ENCODE measurements at regions of chr3 and their contacts with region 1.

Region 1: DNA sequence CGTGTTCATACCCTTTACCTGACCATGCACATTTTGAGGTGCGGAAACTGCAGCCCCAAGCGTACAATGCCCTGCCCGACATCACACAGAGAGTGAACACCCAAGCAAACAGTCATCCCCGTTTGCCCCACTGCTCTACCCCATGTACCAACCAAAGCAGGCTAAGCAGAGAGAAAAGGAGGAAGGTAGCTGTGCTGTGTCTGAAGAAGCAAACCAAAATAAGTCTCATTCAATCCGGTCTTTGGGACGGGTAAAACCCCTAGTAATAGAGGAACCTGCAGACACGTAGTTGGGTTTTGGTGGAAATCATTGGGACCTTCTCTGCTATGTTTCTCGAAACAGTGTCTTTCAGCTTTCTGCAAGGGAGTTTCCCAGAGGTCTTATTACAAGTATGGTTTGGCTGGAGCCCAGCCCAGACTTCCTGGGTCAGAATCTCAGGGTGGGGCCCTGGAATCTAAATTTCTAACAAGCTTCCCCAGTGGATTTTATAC is 164.6 kb upstream of the HES1 start:
- DNase-seq: no peak
- ATAC-seq: no peak

Region 2: DNA sequence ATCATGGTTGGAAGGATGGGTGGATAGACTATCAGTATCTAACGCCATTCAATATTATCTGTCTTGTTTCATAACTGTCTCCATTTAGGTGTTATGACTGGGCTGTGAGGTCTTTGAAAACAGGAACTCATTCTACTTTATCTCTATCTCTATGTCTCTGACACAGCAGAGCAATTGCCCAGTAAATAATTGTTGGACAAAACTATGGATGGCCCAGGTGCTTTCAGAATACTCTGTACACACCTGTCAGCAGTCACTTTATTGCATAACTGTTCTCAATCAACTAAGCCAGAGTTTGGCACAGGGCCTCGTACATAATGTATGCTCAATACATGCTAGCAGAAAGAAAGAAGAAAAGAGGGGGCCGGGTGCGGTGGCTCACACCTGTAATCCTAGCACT is 168.0 kb before region 1 on chr3:
- intact Hi-C with region 1: loop called (anchors 5 kb)
- DNase-seq: no peak
- ATAC-seq: no peak